ENCODE measurements at regions of chr14 and their contacts with region 1.

Region 1: GRCh38 chr14:24289649-24290249 is 9.8 kb downstream of the DHRS1 start:
- DNase-seq: peak; percentile 68
- ATAC-seq: peak; percentile 84
- H3K4me3 Mint-ChIP-seq: no peak overlapping the region
- H3K27ac Mint-ChIP-seq: no peak overlapping the region
- H3K4me1 Mint-ChIP-seq: peaks cover 28% of the 10 kb centered on the region
- H3K27me3 Mint-ChIP-seq: no peaks in the 10 kb centered on the region

Region 2: DNA sequence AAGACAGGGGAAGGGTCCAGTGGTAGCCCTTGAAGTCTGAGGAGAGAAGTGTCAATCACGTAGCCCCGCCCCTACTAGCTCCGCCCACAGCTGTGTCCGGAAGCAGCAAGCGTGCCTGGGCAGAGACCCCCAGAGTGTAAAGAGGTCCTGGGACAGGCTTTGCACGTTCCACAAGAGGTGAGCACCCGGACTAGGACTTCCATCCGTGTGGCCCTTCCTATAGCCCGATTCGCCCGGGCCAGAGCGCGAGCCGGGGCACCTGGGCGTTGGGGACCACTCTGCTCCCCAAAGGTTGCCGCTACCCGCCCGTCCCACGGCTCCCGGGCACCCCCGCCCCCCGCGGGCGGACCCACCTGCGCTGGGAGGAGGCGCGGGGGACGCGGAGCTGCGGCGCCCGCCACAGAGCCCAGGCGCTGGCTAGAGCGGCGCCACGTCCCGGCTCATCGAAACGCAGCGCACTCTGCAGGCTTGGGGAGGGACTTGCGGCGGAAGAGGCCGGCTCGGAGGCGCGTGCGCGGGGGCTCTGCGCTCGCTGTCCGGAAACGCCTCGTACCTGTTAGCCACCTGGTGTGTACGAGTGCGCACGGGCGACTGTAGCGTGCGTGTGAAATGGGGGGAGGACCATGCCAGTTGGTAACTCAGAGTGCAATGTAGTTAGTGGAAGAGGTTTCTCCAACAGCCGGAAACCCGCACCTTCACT is 18.5 kb before region 1 on chr14 and contains the start of gene RABGGTA:
- CTCF ChIA-PET with region 1: interaction called, 21 read pairs
- POLR2A ChIA-PET with region 1: interaction called, 6 read pairs
- DNase-seq: peak; percentile 93
- ATAC-seq: peak; percentile 94
- H3K4me3 Mint-ChIP-seq: peak within 1 kb of the TSS; percentile 90
- H3K27ac Mint-ChIP-seq: peak within 1 kb of the TSS; percentile 91
- H3K4me1 Mint-ChIP-seq: peaks cover 47% of the 10 kb centered on the region
- H3K27me3 Mint-ChIP-seq: no peaks in the 10 kb centered on the region
- total RNA-seq, gene RABGGTA: 47.7 to 51.8 TPM

Region 3: GRCh38 chr14:24279301-24280186 is 10.2 kb before region 1 on chr14:
- CTCF ChIA-PET with region 1: interaction called, 21 read pairs
- POLR2A ChIA-PET with region 1: interaction called, 6 read pairs
- DNase-seq: peak; percentile 44
- ATAC-seq: peak; percentile 69
- H3K4me3 Mint-ChIP-seq: no peak overlapping the region
- H3K27ac Mint-ChIP-seq: peak overlapping the region; percentile 73
- H3K4me1 Mint-ChIP-seq: peaks cover 30% of the 10 kb centered on the region
- H3K27me3 Mint-ChIP-seq: no peaks in the 10 kb centered on the region

Region 4: GRCh38 chr14:24324024-24324423 is 34.3 kb after region 1 on chr14:
- CTCF ChIA-PET with region 1: no interaction called
- POLR2A ChIA-PET with region 1: no interaction called
- DNase-seq: no peak
- ATAC-seq: no peak
- H3K4me3 Mint-ChIP-seq: no peak overlapping the region
- H3K27ac Mint-ChIP-seq: no peak overlapping the region
- H3K4me1 Mint-ChIP-seq: peaks cover 29% of the 10 kb centered on the region
- H3K27me3 Mint-ChIP-seq: peaks cover 14% of the 10 kb centered on the region

Region 5: DNA sequence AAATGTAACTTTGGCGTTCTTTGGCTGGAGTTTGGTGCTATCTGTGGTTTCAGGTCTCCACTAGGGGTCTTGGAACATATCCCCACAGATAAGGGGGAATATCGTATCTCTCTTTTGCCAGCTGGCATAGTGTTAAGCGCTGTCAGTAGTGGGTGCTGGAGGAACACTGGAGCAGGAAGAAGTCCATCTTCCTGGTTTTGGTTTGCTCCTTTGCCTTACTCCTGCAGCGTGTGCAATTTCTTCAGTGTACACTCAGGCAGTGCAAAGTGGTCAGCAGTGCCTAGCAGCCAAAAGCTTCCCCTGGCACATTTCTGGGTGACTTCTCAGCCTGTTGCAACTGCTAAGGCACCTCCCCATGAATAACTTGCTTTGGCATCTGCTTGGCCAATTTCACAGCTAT is 61.8 kb after region 1 on chr14:
- CTCF ChIA-PET with region 1: no interaction called
- POLR2A ChIA-PET with region 1: no interaction called
- DNase-seq: no peak
- ATAC-seq: no peak
- H3K4me3 Mint-ChIP-seq: no peak overlapping the region
- H3K27ac Mint-ChIP-seq: no peak overlapping the region
- H3K4me1 Mint-ChIP-seq: no peaks in the 10 kb centered on the region
- H3K27me3 Mint-ChIP-seq: peaks cover 41% of the 10 kb centered on the region